Calu3 (cell line): ENCODE measurements at regions of chr12 and their contacts with region 1.

Region 1: DNA sequence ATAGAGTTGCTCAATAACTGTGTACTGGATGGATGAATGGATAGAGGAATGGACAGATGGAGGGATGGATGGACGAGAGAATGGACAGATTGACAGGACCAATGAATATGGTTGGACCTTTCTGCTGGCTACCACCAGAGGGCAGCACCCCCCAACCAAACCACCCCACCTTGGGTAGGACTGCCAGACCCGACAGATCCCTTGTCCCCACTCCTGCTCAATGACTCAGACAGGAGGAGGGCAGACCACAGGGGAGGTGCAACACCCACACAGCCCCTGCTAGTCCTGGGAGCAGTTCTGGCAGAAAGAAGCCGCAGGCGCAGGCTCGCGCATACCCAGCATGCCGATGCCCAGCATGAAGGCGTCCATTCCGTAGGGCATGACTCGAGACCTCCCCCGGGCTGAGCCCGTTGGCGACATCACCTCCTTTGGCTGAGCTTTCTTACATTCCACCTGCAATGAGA is 12.4 kb downstream of the MSI1 start:
- DNase-seq: peak; percentile 95
- H3K4me3 Mint-ChIP-seq: no peak overlapping the region
- H3K27ac Mint-ChIP-seq: no peak overlapping the region
- H3K4me1 Mint-ChIP-seq: peaks cover 13% of the 10 kb centered on the region
- H3K27me3 Mint-ChIP-seq: peaks cover 41% of the 10 kb centered on the region
- CTCF ChIP-seq: peak; percentile 89

Region 2: DNA sequence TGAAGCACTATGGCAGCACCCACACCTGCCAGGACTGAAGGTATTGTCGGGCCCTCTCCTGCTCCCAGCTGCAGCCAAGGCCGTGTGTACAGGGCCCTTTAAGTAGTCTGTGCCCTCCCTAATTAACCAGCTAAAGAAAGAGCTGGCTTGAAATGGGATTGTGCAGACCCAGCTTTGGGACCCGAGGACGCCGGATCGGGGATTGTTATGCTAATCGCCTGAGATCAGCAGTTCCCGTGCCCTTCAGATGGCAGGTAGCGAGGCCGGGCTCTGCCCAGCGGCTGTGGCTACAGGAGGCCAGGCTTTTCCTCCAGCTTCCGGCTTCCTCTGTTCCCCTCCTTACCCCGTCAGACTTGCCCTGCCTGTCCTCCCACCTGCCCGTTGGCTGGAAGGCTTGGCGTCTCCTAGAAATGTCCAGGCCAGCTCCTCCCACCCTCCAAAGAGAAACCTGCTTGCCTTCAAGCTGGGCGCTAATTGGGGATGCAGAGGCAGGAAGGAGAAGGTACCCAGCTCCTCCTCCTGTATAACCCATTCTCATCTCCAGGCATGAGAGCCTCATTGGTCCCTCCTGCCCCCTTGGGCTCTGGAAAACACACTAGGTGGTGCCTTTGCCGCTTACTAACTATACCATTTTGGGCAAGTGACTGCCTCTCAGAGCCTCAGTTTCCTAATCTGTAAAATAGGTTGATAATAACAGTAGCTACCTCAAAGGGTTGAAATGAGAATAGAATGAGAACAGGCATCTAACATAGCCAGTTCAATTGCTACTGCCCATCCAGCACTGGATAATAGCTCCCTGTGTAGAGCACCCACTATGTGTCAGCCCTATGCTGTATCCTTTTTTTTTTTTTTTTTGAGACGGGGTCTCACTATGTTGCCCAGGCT is 38.1 kb after region 1 on chr12:
- CTCF ChIA-PET with region 1: no interaction called
- intact Hi-C with region 1: loop called (anchors 5 kb)
- DNase-seq: peak; percentile 90
- H3K4me3 Mint-ChIP-seq: peak overlapping the region; percentile 15
- H3K27ac Mint-ChIP-seq: no peak overlapping the region
- H3K4me1 Mint-ChIP-seq: peaks cover 14% of the 10 kb centered on the region
- H3K27me3 Mint-ChIP-seq: peaks cover 31% of the 10 kb centered on the region
- CTCF ChIP-seq: no peak